IMR-90 (cell line): ENCODE measurements at regions of chr3 and their contacts with region 1.

Region 1: DNA sequence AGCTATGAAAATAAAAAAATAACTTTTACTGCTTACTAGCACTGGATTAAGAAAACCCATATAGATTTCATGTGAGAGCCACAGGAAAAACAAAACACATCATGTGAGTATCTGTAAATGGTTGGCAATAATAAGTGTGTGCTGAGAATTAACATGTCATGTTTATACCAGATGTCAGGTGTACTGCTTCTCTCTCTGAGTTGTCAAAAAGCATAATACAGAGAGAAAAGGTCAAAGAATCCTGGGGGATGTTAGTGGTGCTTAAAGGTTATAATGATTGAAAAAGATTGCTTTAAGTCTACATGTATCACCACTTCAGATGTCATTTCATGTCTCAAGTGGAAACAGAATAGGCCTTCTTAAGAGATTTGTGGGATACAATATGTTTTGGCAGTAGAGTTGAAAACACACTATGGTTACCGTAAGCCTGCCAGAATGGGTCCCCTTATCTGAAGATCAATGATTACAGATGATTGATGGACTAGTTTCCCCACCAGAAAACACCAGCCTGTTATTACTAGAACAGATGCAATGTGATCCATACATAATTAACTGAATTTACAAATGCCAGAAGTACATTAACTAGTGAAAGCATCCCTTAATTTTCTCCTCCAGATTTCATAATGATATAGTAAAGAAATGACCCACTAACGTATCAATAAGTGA is 204.1 kb downstream of the CNTN3 start:
- DNase-seq: no peak
- ATAC-seq: no peak
- H3K4me3 ChIP-seq: no peak overlapping the region
- H3K27ac ChIP-seq: no peak overlapping the region
- H3K4me1 ChIP-seq: no peaks in the 10 kb centered on the region
- H3K27me3 ChIP-seq: no peaks in the 10 kb centered on the region
- CTCF ChIP-seq: no peak
- POLR2A ChIP-seq: no peak
- RAD21 ChIP-seq: no peak

Region 2: GRCh38 chr3:74080056-74080461 is 330.4 kb before region 1 on chr3:
- CTCF ChIA-PET with region 1: no interaction called
- POLR2A ChIA-PET with region 1: interaction called, 12 read pairs
- dilution Hi-C with region 1: no loop called
- in situ Hi-C with region 1: no loop called
- intact Hi-C with region 1: no loop called
- DNase-seq: no peak
- ATAC-seq: no peak
- H3K4me3 ChIP-seq: no peak overlapping the region
- H3K27ac ChIP-seq: no peak overlapping the region
- H3K4me1 ChIP-seq: no peaks in the 10 kb centered on the region
- H3K27me3 ChIP-seq: no peaks in the 10 kb centered on the region; the same call in 1 of the 2 replicates
- CTCF ChIP-seq: no peak
- POLR2A ChIP-seq: no peak
- RAD21 ChIP-seq: no peak